ENCODE measurements at regions of chr18 and their contacts with region 1.

Region 1: GRCh38 chr18:13213036-13213795 is 5.3 kb upstream of the LDLRAD4 start:
- DNase-seq: no peak
- H3K4me3 ChIP-seq: no peak overlapping the region
- H3K4me3 Mint-ChIP-seq: no peak overlapping the region
- H3K27ac Mint-ChIP-seq: no peak overlapping the region
- H3K4me1 ChIP-seq: peaks cover 8% of the 10 kb centered on the region
- H3K4me1 Mint-ChIP-seq: no peaks in the 10 kb centered on the region
- H3K27me3 ChIP-seq: peaks cover 3% of the 10 kb centered on the region; the same call in 1 of the 2 replicates
- H3K27me3 Mint-ChIP-seq: peaks cover 24% of the 10 kb centered on the region
- CTCF ChIP-seq: no peak

Region 2: GRCh38 chr18:12973562-12974213 is 239.5 kb before region 1 on chr18:
- CTCF ChIA-PET with region 1: no interaction called
- POLR2A ChIA-PET with region 1: no interaction called
- intact Hi-C with region 1: no loop called
- DNase-seq: no peak
- H3K4me3 ChIP-seq: no peak overlapping the region
- H3K4me3 Mint-ChIP-seq: no peak overlapping the region
- H3K27ac Mint-ChIP-seq: no peak overlapping the region
- H3K4me1 ChIP-seq: no peaks in the 10 kb centered on the region
- H3K4me1 Mint-ChIP-seq: peaks cover 14% of the 10 kb centered on the region
- H3K27me3 ChIP-seq: no peaks in the 10 kb centered on the region
- H3K27me3 Mint-ChIP-seq: no peaks in the 10 kb centered on the region
- CTCF ChIP-seq: no peak

Region 3: GRCh38 chr18:13289481-13290205 is 76.4 kb after region 1 on chr18:
- CTCF ChIA-PET with region 1: no interaction called
- POLR2A ChIA-PET with region 1: no interaction called
- intact Hi-C with region 1: no loop called
- DNase-seq: no peak
- H3K4me3 ChIP-seq: no peak overlapping the region
- H3K4me3 Mint-ChIP-seq: no peak overlapping the region
- H3K27ac Mint-ChIP-seq: no peak overlapping the region
- H3K4me1 ChIP-seq: no peaks in the 10 kb centered on the region
- H3K4me1 Mint-ChIP-seq: no peaks in the 10 kb centered on the region
- H3K27me3 ChIP-seq: no peaks in the 10 kb centered on the region; the same call in 1 of the 2 replicates
- H3K27me3 Mint-ChIP-seq: peaks cover 23% of the 10 kb centered on the region
- CTCF ChIP-seq: no peak

Region 4: DNA sequence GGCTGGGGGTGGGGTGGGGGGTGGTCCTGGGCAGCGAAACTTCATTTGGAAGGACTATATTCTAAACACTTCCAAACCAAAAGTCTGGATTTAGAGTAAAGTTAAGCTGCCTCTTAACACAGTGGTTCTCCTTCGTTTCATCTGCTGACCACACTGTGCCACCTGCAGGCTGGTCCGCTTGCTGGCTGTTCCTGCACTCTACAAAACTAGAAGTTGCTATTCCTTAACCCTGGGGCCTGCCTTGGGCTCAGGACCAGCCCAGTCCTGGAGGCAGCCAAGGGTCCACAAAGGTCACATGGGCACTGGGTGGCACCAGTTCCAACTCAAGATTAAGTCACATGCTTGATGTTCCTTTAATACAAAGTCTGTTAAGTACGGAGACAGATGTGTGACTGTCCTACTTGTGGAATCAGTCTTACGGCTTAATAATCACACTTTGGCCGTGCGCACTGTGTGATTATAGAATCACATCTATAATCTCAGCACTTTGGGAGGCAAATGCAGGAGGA is 317.7 kb after region 1 on chr18:
- CTCF ChIA-PET with region 1: interaction called, 6 read pairs
- POLR2A ChIA-PET with region 1: no interaction called
- intact Hi-C with region 1: loop called (anchors 2 kb)
- DNase-seq: peak in 1 of 2 experiments; percentile 31
- H3K4me3 ChIP-seq: no peak overlapping the region
- H3K4me3 Mint-ChIP-seq: no peak overlapping the region
- H3K27ac Mint-ChIP-seq: no peak overlapping the region
- H3K4me1 ChIP-seq: no peaks in the 10 kb centered on the region
- H3K4me1 Mint-ChIP-seq: no peaks in the 10 kb centered on the region
- H3K27me3 ChIP-seq: no peaks in the 10 kb centered on the region
- H3K27me3 Mint-ChIP-seq: peaks cover 20% of the 10 kb centered on the region
- CTCF ChIP-seq: peak; percentile 14 to 60

Measured in Caco-2 (cell line).